Left cardiac atrium (tissue), 4 donors: ENCODE measurements at regions of chr9 and their contacts with region 1.

Region 1: DNA sequence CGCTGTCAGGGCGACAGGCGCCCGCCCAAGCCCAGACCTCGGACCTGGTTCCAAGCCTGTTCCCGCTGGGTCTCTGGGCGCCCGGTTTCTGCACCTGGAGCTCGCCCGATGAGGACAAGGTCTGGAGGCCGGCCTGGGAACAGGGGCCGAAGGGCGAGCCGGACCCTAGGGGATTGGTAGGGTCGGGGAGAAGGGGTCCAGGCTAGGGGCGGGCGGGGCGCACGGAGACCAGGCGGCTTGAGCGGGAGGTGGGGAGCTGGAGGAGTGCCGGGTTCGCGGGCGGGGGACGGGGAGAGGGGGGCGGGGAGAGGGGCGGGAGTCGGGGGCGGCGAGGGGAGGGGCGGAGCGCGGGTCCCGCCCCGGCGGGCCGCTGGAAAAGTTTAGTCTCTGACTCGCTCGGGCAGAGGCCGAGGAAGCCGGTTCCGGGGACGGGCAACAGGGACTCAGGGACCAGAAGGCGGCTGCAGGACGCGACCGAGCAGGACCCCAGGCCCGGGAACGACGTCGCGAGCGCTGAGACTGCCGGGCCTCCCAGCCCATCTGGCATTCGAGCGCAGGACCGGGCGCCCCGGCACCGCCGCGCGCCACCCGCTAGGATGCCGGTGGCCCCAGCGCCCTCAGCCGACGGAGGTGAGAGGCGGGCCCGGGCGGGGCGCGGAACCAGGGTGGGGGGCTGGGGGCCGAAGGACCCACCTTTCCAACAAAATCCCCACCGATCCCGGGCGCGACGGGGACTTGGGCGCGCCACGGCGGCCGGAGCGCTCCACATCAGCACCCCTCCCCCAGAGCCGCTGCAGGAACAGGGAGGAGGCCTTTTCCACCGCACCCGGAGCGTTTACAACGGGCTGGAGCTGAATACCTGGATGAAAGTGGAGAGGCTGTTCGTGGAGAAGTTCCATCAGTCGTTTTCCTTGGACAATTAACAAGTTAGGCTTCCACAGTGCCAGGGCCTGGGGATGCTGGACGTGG is at the start of gene S1PR3:
- DNase-seq: peak; percentile 75
- ATAC-seq: peak; percentile 80 to 88
- total RNA-seq, gene S1PR3: 24.4 to 25.3 TPM

Region 2: GRCh38 chr9:88781628-88782391 is 209.5 kb before region 1 on chr9:
- intact Hi-C with region 1: loop called (anchors 5 to 10 kb)
- DNase-seq: peak; percentile 70
- ATAC-seq: peak; percentile 77 to 81

Region 3: GRCh38 chr9:88874383-88874782 is 117.0 kb before region 1 on chr9:
- intact Hi-C with region 1: loop called in 1 of 2 experiments (anchors 10 kb)
- DNase-seq: no peak
- ATAC-seq: peak; percentile 35 to 40

Region 4: DNA sequence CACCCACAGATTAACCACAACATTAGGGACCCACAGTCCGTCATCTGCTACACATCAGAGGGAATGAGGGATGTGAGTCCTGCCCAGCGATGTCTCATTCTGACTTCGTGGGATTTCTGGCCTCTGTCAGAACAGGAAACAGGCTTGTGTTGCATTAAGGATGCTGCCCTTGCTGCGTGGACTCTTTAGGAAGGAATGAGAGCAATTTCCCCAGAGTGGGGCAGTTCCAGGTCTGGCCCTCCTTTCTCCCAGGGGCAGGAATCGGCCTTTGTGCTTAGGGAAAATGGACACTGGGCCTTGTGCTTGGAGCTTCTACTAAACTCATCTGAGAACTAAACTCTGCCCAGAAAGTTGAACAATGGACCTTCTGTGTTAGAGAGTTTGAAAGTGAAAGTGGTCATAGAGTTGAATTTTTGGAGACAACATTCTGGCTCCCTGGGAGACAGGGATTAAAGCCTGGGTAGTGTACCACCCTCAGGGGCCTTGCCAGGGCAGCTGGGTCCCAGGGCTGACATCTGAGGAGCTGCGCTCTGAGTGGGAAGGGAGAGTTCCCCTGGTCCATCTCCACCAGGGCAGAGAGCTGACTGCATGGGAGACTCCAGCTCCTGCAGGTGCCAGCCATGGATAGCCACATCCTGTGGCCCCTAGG is 37.8 kb before region 1 on chr9:
- intact Hi-C with region 1: loop called in 1 of 2 experiments (anchors 5 kb)
- DNase-seq: no peak
- ATAC-seq: peak; percentile 16 to 55